Common myeloid progenitor, CD34-positive (primary cell): ENCODE measurements at regions of chr3 and their contacts with region 1.

Region 1: DNA sequence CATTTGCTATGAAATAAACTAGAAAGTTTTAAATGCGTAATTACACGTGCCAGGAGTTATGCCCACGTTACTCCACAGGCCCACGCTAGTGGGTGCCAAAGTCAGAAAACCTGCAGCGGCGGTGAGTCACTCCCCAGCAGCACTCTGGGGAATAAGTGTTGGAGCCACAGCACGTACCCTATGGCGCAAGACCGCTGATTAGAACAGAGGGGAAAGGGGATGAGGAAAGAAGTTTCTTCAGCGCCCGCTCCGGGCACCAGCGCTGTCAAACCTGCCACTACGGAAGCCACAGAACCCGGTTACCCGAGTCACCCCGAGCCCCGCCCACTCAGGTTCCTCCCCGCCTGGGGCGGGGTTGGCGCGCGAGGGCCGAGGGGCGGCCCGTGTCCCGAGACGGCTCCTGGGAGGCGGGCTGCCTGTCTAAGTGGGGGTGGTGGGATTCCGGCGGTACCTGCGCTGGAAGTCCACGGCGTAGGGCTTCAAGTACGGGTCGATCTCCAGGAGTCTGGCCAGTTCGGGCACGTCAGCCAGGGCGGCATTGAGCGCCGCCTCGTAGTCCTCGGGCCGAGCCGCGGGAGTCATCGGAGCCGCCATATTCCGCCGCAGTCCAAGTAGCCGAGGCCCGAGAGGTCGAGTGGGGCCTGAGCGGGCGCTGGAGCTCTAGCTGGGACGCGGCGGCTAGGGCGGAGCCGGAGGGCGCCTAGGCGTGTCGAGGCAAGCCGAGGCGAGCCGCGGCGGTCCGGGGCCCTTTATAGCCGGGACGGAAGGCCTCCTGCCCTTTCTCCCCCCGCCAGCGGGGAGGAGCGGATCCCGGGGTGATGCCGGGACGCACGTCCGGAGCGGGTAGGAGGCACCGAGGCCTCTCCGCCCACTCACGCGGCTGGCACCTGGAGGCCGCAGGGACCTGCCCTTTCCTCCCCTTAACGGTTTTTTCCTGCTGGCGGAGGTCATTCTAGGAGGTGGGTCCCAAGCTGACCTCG is at the start of gene GBE1:
- DNase-seq: peak; percentile 96 to 99 (median 98)
- H3K4me3 ChIP-seq: peak within 1 kb of the TSS; percentile 60 to 94 (median 79)
- H3K27ac ChIP-seq: peak within 1 kb of the TSS; percentile 95 to 97
- H3K4me1 ChIP-seq: peaks cover 9 to 32% (median 27%) of the 10 kb centered on the region in 4 experiments
- H3K27me3 ChIP-seq: no peaks in the 10 kb centered on the region

Region 2: DNA sequence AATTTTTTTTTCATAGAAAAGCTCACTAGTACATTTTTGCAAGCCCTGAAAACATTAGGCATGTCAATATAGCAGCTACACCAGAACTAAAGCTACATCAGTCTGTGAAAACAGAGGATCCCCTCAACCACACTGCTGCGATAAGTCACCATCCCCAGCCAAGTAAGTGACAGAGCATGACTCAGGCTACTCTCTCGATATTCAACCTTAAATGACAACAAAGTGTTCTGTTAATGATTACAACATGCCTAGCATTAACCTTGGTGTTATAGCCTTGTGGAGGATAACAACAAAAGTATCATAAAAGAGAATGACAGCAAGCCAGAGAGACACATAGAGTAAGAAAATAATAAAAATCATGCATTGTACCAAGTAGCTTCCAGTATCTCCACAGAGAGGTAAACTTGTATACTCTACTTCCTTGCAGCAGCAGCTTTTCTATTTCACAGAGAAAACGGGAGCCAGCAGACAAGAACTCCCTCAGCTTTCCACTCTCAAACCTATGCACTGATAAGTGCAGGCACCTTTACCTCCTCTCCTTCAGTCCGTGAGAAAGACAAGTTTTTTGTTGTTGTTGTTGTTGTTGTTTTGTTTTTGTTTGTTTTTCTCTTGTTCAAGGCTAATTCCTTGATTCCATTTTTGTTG is 76.3 kb before region 1 on chr3:
- CTCF ChIA-PET with region 1: no interaction called
- POLR2A ChIA-PET with region 1: no interaction called
- DNase-seq: peak in 2 of 3 donors; percentile 11 to 26
- H3K4me3 ChIP-seq: no peak overlapping the region
- H3K27ac ChIP-seq: no peak overlapping the region
- H3K4me1 ChIP-seq: peaks cover 0 to 5% (median 0%) of the 10 kb centered on the region in 4 experiments
- H3K27me3 ChIP-seq: no peaks in the 10 kb centered on the region

Region 3: GRCh38 chr3:81743096-81744025 is 17.9 kb before region 1 on chr3:
- CTCF ChIA-PET with region 1: interaction called, 10 read pairs
- POLR2A ChIA-PET with region 1: interaction called, 3 read pairs
- DNase-seq: peak; percentile 65 to 96 (median 95)
- H3K4me3 ChIP-seq: no peak overlapping the region
- H3K27ac ChIP-seq: no peak overlapping the region
- H3K4me1 ChIP-seq: peaks cover 0 to 15% (median 8%) of the 10 kb centered on the region in 4 experiments
- H3K27me3 ChIP-seq: no peaks in the 10 kb centered on the region